ENCODE measurements at regions of chr15 and their contacts with region 1.

Region 1: DNA sequence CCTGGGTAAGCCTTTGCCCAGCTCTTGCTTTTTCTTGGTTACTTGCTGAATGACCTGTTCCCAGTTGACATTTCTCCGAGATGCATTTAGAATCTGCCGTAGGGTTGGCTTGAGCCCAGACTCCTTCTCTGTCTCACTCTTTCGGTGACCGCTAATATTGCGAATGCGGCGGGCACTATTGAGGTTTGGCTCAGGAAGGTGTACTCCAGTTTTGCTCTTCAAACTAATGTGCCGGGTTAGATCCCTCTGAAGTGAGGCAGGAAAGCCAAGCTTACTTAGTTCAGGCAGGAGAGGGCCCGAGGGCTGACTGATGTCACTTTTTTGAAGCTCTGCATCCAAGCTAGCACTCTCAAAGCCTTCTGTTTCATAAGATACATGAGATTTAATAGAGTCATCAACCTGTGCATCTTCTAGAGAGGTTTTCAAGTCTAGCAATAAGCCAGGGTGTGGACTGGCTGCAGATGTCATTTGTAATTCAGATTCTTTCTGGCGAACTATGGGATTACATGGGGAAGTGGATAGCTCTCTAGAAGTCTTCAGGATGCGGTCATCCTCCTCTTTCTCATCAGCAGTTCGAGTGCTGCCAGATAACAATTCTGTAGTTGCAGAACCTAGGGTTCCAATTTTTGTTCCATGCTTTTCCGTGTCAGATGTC is 41.0 kb downstream of the ZNF106 start:
- DNase-seq: no peak
- H3K4me3 ChIP-seq: no peak overlapping the region
- H3K27ac ChIP-seq: no peak overlapping the region
- H3K4me1 ChIP-seq: no peaks in the 10 kb centered on the region
- H3K27me3 ChIP-seq: no peaks in the 10 kb centered on the region
- CTCF ChIP-seq: no peak
- POLR2A ChIP-seq: no peak

Region 2: DNA sequence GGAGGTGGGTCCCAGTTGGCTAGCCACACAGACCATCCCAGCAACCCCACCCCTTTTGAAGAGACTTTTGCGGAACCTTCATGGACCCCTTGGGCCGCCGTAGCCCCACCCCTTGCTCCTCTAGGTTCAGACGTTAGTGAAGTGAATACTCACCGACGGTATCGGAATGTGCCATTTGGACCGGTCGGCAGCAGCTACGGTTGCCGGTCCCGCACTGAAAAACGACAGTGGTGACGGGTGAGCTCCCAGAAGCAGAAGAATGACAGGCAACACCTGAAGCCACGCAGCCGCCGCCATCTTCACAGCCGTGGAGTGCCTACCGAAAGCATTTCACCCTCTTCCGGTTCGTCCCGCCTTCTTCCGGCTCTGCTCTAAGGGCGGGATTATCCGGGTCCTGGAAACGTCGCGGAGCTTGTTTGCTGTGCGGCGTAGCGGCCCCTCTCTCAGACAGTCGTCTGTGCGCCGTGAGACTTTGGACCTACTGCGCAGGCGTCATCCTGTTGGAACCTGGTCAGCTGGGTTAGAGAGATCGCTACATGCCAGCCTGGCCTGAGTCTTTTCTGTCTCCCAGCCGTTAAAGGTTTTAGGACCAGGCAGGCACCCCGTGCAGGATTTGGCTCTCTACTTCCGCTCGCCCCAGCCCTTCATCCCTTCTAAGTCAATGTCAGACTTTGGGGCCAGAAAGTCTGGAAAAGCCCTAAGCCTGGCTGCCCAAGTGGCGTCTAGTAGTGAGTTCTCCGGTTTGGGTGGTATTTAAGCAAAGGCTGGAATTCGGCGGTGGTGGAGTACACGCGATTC is 176.6 kb before region 1 on chr15 and contains the starts of genes GANC and TMEM87A:
- intact Hi-C with region 1: loop called (anchors 5 kb)
- DNase-seq: peak; percentile 99
- H3K4me3 ChIP-seq: peak within 1 kb of the TSS; percentile 53 to 79
- H3K27ac ChIP-seq: peak within 1 kb of the TSS; percentile 95 to 99
- H3K4me1 ChIP-seq: peaks cover 7% of the 10 kb centered on the region
- H3K27me3 ChIP-seq: no peaks in the 10 kb centered on the region
- CTCF ChIP-seq: peak in 1 of 4 experiments; percentile 4
- POLR2A ChIP-seq: peak; percentile 81
- total RNA-seq, gene GANC: 10.2 to 38.7 TPM
- total RNA-seq, gene TMEM87A: 88.6 to 130 TPM